Caco-2 (cell line): ENCODE measurements at regions of chr7 and their contacts with region 1.

Region 1: DNA sequence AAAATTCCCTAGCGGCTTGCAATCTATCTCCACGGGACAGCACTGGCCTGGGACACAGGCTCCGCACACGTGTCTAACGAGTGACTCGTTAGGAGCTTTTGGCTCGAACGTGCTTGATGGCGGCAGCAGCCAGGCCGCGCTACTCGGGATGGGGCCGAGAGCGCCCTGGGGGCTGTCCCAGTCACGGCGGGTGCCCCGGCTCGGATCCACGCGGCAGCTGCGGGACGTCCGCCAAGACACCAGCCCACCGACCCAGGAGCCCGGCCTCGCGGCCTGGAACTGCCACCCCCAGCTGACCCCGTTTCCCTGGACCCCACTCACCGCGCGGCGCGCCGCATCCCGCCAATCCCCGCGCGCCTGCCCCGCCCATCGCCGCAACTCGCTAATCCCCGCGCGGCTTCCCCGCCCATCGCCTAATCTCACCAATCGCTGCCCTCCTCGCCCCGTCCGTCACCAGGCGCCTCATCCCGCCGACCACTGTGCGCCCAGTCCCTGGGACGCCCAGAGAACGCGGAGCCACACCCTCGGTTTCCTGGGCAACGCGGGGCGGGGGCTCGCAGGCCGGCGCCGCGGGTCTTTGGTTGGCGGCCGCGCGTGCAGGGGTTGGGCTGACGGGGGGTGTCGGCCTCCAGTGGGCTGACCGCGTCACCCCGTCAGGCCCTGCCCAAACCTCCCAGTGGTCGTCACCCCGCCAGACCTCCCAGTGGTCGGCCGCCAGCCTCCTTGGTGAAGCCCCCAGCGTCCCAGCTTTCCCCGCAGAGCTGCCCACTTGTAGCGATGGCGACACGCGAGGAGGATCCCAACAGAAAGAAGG is at the start of gene POLD2:
- DNase-seq: peak; percentile 98 to 99
- H3K4me3 ChIP-seq: peak within 1 kb of the TSS; percentile 93
- H3K4me3 Mint-ChIP-seq: peak within 1 kb of the TSS; percentile 73
- H3K27ac Mint-ChIP-seq: peak within 1 kb of the TSS; percentile 25
- H3K4me1 ChIP-seq: no peaks in the 10 kb centered on the region
- H3K4me1 Mint-ChIP-seq: peaks cover 12% of the 10 kb centered on the region
- H3K27me3 ChIP-seq: no peaks in the 10 kb centered on the region
- H3K27me3 Mint-ChIP-seq: no peaks in the 10 kb centered on the region
- CTCF ChIP-seq: no peak
- total RNA-seq, gene POLD2: 130 and 140 TPM in 2 replicates

Region 2: GRCh38 chr7:44082541-44083207 is 40.7 kb before region 1 on chr7:
- CTCF ChIA-PET with region 1: no interaction called
- POLR2A ChIA-PET with region 1: no interaction called
- intact Hi-C with region 1: loop called (anchors 1 kb)
- DNase-seq: peak; percentile 99
- H3K4me3 ChIP-seq: peak overlapping the region; percentile 58
- H3K4me3 Mint-ChIP-seq: peak overlapping the region; percentile 78
- H3K27ac Mint-ChIP-seq: peak overlapping the region; percentile 86
- H3K4me1 ChIP-seq: no peaks in the 10 kb centered on the region
- H3K4me1 Mint-ChIP-seq: no peaks in the 10 kb centered on the region
- H3K27me3 ChIP-seq: no peaks in the 10 kb centered on the region
- H3K27me3 Mint-ChIP-seq: no peaks in the 10 kb centered on the region
- CTCF ChIP-seq: no peak